ENCODE measurements at regions of chr19 and their contacts with region 1.

Region 1: GRCh38 chr19:14006243-14006765 is at the start of gene RFX1:
- DNase-seq: peak; percentile 99 to 100 (median 100)
- ATAC-seq: peak; percentile 79
- H3K4me3 ChIP-seq: peak within 1 kb of the TSS; percentile 77
- H3K4me3 Mint-ChIP-seq: peak within 1 kb of the TSS; percentile 91 to 98 (median 96)
- H3K27ac ChIP-seq: peak within 1 kb of the TSS; percentile 99
- H3K27ac Mint-ChIP-seq: peak within 1 kb of the TSS; percentile 98 to 100 (median 100)
- H3K4me1 ChIP-seq: peaks cover 36 to 41% of the 10 kb centered on the region in 2 donors
- H3K4me1 Mint-ChIP-seq: peaks cover 26 to 47% (median 38%) of the 10 kb centered on the region in 7 donors
- H3K27me3 ChIP-seq: no peaks in the 10 kb centered on the region
- H3K27me3 Mint-ChIP-seq: no peaks in the 10 kb centered on the region
- total RNA-seq, gene RFX1: 15.7 to 23.5 (median 20.5) TPM

Region 2: DNA sequence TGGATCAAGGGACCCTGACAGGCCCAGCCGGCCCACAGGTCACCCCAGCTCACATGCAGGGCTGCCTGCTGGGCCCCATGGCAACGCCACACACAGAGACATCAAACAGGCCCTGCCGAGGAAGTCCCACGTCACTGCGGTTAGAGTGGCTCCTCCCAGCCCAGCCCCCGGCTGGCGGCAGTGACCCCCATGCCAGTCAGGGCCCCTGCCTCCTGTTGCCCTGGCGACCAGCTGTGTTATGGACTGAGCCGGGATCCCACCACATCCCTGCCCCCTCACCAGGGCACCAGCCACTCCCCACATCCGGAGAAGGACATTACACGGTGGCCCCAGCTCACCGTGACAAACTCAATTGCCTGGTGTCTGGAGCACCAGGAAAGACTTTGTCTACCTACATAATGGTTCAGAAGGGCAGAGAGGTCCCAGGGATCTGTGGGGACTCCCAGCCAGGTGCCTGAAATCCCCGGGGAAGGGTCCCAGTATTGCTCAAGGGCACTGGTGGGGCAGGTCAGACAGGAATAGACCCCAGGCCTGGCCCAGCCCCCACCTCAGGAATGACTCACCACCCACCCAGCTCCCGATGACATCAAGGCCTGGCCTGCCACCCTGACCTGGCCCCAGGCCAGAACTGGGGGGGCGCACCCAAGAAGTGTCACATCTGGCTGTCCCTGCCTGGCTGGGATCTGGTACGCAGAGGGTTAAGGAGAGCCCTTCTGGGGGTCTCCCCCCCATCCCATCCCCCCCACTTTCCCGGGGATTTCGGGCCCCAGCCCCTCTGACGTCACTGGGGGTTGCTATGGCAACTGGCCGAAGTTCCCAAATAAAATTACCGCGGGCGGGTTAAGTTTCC is 159.5 kb before region 1 on chr19:
- CTCF ChIA-PET with region 1: no interaction called
- POLR2A ChIA-PET with region 1: no interaction called
- intact Hi-C with region 1: loop called (anchors 1 to 2 kb)
- DNase-seq: peak; percentile 91 to 98 (median 97)
- ATAC-seq: peak; percentile 75
- H3K4me3 ChIP-seq: peak overlapping the region; percentile 72
- H3K4me3 Mint-ChIP-seq: peak overlapping the region; percentile 82 to 96 (median 90)
- H3K27ac ChIP-seq: peak overlapping the region; percentile 95
- H3K27ac Mint-ChIP-seq: peak overlapping the region; percentile 99 to 100 (median 100)
- H3K4me1 ChIP-seq: peaks cover 47 to 55% of the 10 kb centered on the region in 2 donors
- H3K4me1 Mint-ChIP-seq: peaks cover 19 to 62% (median 55%) of the 10 kb centered on the region in 7 donors
- H3K27me3 ChIP-seq: no peaks in the 10 kb centered on the region
- H3K27me3 Mint-ChIP-seq: peaks cover 0 to 3% (median 0%) of the 10 kb centered on the region in 5 donors

Region 3: DNA sequence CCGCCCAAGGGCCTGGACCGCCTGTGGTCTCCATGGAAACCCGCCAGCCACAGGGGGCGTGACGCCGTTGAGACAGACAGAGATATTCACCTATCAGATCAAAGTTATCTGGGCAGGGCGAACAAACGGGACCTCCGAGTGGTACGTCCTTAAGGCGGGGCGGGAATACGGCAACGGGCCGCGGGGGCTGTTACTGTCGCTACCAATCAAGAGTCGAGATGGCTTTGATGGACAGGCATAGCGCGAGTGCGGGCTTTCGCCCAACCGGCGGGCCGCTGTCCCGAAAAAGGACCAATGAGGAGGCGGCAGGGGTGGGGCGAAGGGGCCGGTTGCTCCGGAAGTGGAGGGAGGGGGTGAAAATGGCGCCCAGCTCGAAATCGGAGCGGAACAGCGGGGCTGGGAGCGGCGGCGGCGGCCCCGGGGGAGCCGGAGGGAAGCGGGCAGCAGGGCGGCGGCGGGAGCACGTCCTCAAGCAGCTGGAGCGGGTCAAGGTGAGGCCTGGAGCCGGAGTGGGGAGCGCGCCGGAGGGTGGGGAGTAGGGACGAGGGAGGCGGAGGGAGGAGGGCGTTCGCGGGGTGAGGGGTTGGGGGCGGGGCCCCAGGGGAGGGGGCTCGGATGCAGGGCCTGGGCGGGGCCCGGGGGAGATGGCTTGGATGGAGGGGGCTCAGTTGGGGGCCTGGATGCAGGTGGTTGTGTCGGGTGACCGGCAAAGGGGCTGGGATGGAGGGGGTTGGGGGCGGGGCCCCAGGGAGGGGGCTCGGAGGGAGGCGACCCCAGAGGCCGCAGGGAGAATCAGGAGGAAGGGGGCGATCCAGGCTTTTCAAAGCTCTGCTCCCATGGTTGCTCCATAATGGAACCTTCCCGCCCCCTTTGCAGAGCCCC is 53.9 kb before region 1 on chr19 and contains the start of gene DCAF15:
- CTCF ChIA-PET with region 1: interaction called, 4 read pairs
- POLR2A ChIA-PET with region 1: interaction called, 26 read pairs
- intact Hi-C with region 1: loop called (anchors 1 kb)
- DNase-seq: peak; percentile 89 to 99 (median 99)
- ATAC-seq: peak; percentile 98
- H3K4me3 ChIP-seq: peak within 1 kb of the TSS; percentile 75
- H3K4me3 Mint-ChIP-seq: peak within 1 kb of the TSS; percentile 74 to 99 (median 93)
- H3K27ac ChIP-seq: peak within 1 kb of the TSS; percentile 90
- H3K27ac Mint-ChIP-seq: peak within 1 kb of the TSS; percentile 86 to 99 (median 91)
- H3K4me1 ChIP-seq: peaks cover 13 to 17% of the 10 kb centered on the region in 2 donors
- H3K4me1 Mint-ChIP-seq: peaks cover 5 to 24% (median 19%) of the 10 kb centered on the region in 7 donors
- H3K27me3 ChIP-seq: no peaks in the 10 kb centered on the region
- H3K27me3 Mint-ChIP-seq: no peaks in the 10 kb centered on the region
- total RNA-seq, gene DCAF15: 68.5 to 92.0 (median 87.2) TPM

Region 4: GRCh38 chr19:13986348-13986904 is 19.9 kb before region 1 on chr19:
- CTCF ChIA-PET with region 1: interaction called, 4 read pairs
- POLR2A ChIA-PET with region 1: interaction called, 160 read pairs
- intact Hi-C with region 1: loop called (anchors 1 kb)
- DNase-seq: peak; percentile 94 to 98 (median 97)
- ATAC-seq: peak; percentile 94
- H3K4me3 ChIP-seq: peak overlapping the region; percentile 48
- H3K4me3 Mint-ChIP-seq: peak overlapping the region; percentile 61 to 85 (median 77)
- H3K27ac ChIP-seq: peak overlapping the region; percentile 97
- H3K27ac Mint-ChIP-seq: peak overlapping the region; percentile 92 to 99 (median 96)
- H3K4me1 ChIP-seq: peaks cover 39 to 65% of the 10 kb centered on the region in 2 donors
- H3K4me1 Mint-ChIP-seq: peaks cover 48 to 89% (median 66%) of the 10 kb centered on the region in 7 donors
- H3K27me3 ChIP-seq: no peaks in the 10 kb centered on the region
- H3K27me3 Mint-ChIP-seq: no peaks in the 10 kb centered on the region

Region 5: DNA sequence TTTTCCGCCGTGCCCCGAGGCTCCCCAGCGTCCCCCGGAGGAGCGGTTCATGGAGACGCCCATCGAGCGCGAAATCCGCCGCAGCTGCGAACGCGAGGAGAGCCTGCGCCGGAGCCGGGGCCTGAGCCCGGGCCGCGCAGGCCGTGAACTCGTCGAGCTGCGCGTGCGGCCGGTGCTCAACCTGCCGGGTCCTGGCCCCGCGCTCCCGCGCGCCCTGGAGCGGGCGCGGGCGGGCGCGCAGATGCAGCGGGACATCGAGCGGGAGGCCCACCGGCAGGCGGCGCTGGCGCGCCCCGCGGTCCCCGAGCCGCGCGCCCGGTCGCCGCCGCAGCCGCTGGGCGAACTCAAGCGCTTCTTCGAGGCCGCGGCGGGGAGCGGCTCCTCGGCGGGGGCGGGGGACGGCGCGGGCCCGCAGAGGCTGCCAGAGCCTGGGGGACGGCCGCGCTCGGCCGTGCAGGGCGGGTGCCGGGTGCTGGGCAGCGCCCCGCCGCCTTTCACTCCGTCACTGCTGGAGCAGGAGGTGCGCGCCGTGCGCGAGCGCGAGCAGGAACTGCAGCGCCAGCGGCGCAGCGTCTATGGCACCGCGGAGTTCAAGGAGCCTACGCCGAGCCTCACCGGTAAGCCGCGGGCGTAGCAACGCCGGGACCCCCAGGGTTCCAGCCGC is 67.1 kb after region 1 on chr19:
- CTCF ChIA-PET with region 1: no interaction called
- POLR2A ChIA-PET with region 1: interaction called, 3 read pairs
- intact Hi-C with region 1: loop called (anchors 5 kb)
- DNase-seq: peak; percentile 65 to 91 (median 87)
- ATAC-seq: peak; percentile 86
- H3K4me3 ChIP-seq: peak overlapping the region; percentile 91
- H3K4me3 Mint-ChIP-seq: peak overlapping the region; percentile 87 to 99 (median 93)
- H3K27ac ChIP-seq: peak overlapping the region; percentile 50
- H3K27ac Mint-ChIP-seq: peak overlapping the region in 7 of 9 donors; percentile 62 to 89 (median 78)
- H3K4me1 ChIP-seq: peaks cover 9 to 18% of the 10 kb centered on the region in 2 donors
- H3K4me1 Mint-ChIP-seq: peaks cover 7 to 24% (median 10%) of the 10 kb centered on the region in 7 donors
- H3K27me3 ChIP-seq: no peaks in the 10 kb centered on the region
- H3K27me3 Mint-ChIP-seq: peaks cover 0 to 10% (median 0%) of the 10 kb centered on the region in 5 donors

Region 6: GRCh38 chr19:14091081-14091812 is 84.9 kb after region 1 on chr19:
- CTCF ChIA-PET with region 1: no interaction called
- POLR2A ChIA-PET with region 1: interaction called, 3 read pairs
- intact Hi-C with region 1: loop called in 1 of 2 experiments (anchors 1 kb)
- DNase-seq: peak; percentile 56 to 89 (median 84)
- ATAC-seq: peak; percentile 71
- H3K4me3 ChIP-seq: peak overlapping the region; percentile 99
- H3K4me3 Mint-ChIP-seq: peak overlapping the region; percentile 81 to 100 (median 98)
- H3K27ac ChIP-seq: peak overlapping the region; percentile 89
- H3K27ac Mint-ChIP-seq: peak overlapping the region; percentile 89 to 100 (median 98)
- H3K4me1 ChIP-seq: peaks cover 8 to 10% of the 10 kb centered on the region in 2 donors
- H3K4me1 Mint-ChIP-seq: peaks cover 13 to 21% (median 18%) of the 10 kb centered on the region in 7 donors
- H3K27me3 ChIP-seq: no peaks in the 10 kb centered on the region
- H3K27me3 Mint-ChIP-seq: no peaks in the 10 kb centered on the region

Region 7: DNA sequence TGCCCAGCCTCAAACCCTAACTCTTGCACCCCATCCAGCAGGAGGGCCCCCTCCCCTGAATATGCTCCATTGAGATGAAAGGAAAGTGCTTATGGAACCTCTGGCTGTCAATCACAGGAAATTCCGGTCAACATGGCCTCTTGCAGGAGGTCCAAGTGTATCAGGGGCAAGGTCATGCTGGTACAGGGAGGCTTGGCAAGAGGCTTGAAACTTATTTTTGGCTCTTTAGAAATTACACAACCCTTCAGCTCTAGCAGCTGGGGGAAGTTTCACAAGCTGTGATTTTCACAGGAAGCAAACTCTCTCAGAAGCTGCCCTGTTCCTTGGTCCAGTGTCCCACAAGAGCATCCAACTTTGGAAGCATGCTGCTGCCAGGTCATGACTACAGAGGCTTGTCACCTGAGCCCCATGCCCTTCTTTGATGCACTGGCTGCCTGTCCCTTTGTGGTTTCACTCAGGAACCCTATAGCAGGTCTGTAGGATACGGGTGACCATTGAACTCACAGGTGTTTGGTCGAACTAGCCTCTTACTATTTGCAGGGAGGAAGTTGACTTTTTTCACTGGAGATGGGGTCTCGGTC is 121.7 kb after region 1 on chr19:
- CTCF ChIA-PET with region 1: no interaction called
- POLR2A ChIA-PET with region 1: no interaction called
- intact Hi-C with region 1: no loop called
- DNase-seq: no peak
- ATAC-seq: peak; percentile 53
- H3K4me3 ChIP-seq: no peak overlapping the region
- H3K4me3 Mint-ChIP-seq: no peak overlapping the region
- H3K27ac ChIP-seq: no peak overlapping the region
- H3K27ac Mint-ChIP-seq: no peak overlapping the region
- H3K4me1 ChIP-seq: no peaks in the 10 kb centered on the region
- H3K4me1 Mint-ChIP-seq: peaks cover 0 to 8% (median 0%) of the 10 kb centered on the region in 7 donors
- H3K27me3 ChIP-seq: no peaks in the 10 kb centered on the region
- H3K27me3 Mint-ChIP-seq: no peaks in the 10 kb centered on the region

Measured in naive thymus-derived CD4-positive, alpha-beta T cell (primary cell).